SK-MEL-5 (cell line): ENCODE measurements at regions of chr15 and their contacts with region 1.

Region 1: DNA sequence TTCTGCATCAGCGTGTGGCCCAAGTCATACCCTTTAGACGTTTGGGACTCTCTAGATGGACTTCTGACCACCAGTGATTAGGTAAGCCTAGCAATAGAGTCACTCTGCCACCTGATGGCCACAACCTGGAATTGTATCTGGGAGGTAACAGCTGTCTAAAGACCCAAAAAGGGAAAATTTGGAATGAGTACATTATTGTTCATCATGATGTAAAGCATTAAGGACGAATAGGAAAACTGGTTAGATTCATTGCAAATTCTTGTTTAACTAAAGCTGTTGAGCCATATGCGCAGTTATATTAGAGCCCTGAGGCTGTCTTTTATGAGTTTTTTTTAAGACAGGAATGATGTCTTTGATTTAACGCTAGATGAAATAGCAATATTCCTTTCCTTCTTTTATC is 63.6 kb downstream of the FAM81A start:
- DNase-seq: peak; percentile 82

Region 2: GRCh38 chr15:59002418-59002859 is 499.2 kb before region 1 on chr15:
- in situ Hi-C with region 1: loop called (anchors 10 kb)
- DNase-seq: no peak

Region 3: DNA sequence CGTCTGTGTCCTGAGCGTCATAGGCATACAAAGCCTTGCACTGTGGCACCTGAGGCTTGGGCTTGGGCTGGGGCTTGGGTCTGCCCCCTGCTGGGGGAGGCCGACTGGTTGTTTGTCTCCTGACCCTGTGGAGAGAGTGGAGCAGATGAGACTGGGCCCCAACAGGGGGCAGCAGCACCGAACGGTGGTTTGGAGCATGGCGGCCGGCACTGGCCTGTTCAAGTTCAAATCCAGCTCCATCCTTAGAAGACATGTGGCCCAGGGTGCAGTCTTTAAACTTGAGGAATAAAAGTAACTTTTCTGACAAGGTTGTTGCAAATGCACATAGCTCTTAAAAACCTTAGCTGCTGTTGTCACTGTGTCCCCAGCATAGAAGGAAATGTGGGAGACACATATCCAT is 363.4 kb before region 1 on chr15:
- in situ Hi-C with region 1: loop called (anchors 25 kb)
- DNase-seq: peak; percentile 93

Region 4: GRCh38 chr15:59388670-59389069 is 112.9 kb before region 1 on chr15:
- in situ Hi-C with region 1: no loop called
- DNase-seq: no peak